ENCODE measurements at regions of chr3 and their contacts with region 1.

Region 1: DNA sequence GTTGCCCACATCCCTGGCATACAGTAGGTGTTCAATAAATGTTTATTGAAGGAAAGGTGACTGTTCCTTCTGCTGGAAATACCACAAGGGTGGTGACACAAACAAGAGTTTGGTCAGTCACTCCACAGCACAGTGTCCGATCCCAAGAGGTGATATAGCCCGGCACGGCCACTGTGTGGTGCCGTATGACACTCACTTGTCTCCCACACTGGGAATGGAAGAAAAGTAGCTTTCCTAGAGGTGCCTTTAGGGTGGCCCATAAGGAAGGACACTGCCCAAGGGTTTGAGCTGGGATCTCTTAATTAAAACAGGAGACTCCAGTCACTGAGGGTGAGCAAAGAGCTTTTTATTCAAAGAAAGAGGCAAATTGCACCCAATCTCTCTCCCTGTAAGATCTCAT is 40.5 kb downstream of the TGM4 start:
- DNase-seq: peak; percentile 44 to 47
- H3K4me3 ChIP-seq: no peak overlapping the region
- H3K27ac ChIP-seq: no peak overlapping the region
- H3K4me1 ChIP-seq: no peaks in the 10 kb centered on the region
- H3K27me3 ChIP-seq: no peaks in the 10 kb centered on the region
- CTCF ChIP-seq: peak in 4 of 6 experiments; percentile 26 to 49 (median 47)
- POLR2A ChIP-seq: no peak

Region 2: GRCh38 chr3:44529927-44530326 is 385.0 kb before region 1 on chr3:
- intact Hi-C with region 1: loop called (anchors 5 kb)
- DNase-seq: no peak
- H3K4me3 ChIP-seq: no peak overlapping the region
- H3K27ac ChIP-seq: no peak overlapping the region
- H3K4me1 ChIP-seq: no peaks in the 10 kb centered on the region
- H3K27me3 ChIP-seq: no peaks in the 10 kb centered on the region
- CTCF ChIP-seq: no peak
- POLR2A ChIP-seq: no peak

Region 3: DNA sequence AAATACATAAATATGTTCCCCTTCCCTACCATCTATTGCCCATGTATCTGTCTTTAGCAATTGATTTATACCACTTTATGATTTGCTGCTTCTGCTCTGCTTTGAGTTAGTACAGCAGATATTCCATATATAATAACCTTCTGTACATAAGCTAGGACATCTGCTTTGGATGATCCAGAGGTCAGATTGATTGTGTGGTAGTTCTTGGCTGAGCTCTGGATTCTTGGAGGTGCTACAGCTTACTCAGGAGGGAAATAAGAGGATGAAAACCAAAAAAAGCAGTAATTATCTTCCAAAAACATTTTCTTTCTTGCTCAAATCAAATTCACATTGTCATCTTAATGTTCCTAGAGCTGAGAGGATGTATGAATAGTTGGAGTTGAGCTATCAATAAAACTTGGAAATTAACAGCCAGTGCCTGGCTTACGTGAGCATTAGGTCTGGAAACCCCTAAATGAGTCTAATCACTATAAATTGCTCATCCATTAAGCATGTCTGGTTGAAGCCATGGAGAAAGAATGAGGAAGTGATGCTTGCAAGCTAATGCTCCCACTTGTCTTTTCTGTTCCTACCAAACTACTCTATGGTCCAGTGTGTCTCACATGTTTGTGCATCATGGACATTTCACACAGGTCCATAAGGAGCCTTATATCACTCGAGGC is 89.5 kb before region 1 on chr3:
- intact Hi-C with region 1: no loop called
- DNase-seq: no peak
- H3K4me3 ChIP-seq: no peak overlapping the region
- H3K27ac ChIP-seq: no peak overlapping the region
- H3K4me1 ChIP-seq: no peaks in the 10 kb centered on the region
- H3K27me3 ChIP-seq: no peaks in the 10 kb centered on the region
- CTCF ChIP-seq: no peak
- POLR2A ChIP-seq: no peak